GM12878 (cell line): ENCODE measurements at regions of chr1 and their contacts with region 1.

Region 1: DNA sequence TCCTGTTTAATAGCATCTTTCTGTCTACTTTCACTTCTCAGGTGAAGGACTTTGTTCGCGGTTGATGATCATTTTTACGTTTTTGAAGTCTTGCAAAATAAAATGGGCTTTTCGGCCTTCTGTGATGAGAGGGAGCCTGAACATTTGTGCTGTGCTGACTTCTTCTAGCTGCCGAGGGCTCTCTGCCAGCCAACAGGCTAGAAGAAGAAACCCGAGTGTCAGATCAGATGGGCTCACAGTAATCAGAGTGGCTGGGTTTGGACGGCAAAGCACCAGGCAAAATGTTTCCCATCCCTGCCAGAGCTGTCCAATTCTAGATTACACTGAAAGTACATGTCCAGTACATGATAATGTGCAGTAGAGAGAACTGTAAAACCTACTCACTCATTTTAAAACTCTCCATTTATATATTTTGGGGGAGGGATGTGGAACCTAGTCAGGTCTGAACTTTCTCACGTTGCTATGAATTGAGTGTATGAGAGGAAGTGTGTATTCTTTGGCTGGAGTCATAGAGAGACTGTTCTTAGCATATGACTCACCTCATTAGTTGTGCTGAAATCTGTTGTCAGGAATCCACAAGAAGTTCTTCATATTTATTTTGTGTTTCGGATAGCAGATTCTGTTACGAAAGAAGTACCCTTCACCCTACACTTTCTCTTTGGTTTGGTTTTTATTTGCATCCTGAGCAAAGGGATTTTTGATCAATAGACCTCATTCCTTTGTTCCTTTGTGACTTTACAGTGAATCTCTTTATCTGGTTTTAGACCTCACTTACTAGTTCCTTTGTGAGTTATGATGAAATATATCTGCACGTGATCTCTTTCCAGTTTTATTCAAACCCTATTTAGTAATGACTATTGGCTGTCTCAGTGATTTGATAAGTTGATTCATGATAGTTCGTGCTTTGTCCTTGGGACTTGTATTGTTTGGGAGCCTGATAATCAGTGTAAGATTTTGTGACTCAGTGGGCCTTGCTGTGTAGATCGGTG is 4.8 kb downstream of the ATP1A1 start:
- DNase-seq: peak; percentile 96
- ATAC-seq: peak; percentile 60
- H3K4me3 ChIP-seq: peak overlapping the region; percentile 95
- H3K27ac ChIP-seq: peak overlapping the region; percentile 96
- H3K4me1 ChIP-seq: peaks cover 38% of the 10 kb centered on the region
- H3K27me3 ChIP-seq: no peaks in the 10 kb centered on the region
- CTCF ChIP-seq: no peak
- EP300 ChIP-seq: peak; percentile 84 to 92
- POLR2A ChIP-seq: peak; percentile 56
- RAD21 ChIP-seq: no peak

Region 2: DNA sequence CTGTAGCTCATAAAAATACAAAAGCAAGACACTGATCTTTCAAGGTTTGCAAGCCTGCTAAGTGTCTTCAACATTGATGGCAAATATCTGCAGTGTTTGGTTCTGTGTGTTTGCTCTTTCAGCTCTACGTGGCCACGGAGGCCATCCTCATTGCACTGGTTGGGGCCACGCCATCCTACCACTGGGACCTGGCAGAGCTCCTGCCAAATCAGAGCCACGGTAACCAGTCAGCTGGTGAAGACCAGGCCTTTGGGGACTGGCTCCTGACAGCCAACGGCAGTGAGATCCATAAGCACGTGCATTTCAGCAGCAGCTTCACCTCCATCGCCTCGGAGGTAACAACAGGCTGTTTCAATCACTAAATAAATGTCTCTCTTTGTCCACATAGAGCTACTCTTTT is 385.9 kb before region 1 on chr1:
- CTCF ChIA-PET with region 1: no interaction called
- POLR2A ChIA-PET with region 1: no interaction called
- RAD21 ChIA-PET with region 1: no interaction called
- SMC1A ChIA-PET with region 1: no interaction called
- in situ Hi-C with region 1: no loop called
- intact Hi-C with region 1: no loop called
- DNase-seq: no peak
- ATAC-seq: no peak
- H3K4me3 ChIP-seq: no peak overlapping the region
- H3K27ac ChIP-seq: no peak overlapping the region
- H3K4me1 ChIP-seq: no peaks in the 10 kb centered on the region
- H3K27me3 ChIP-seq: no peaks in the 10 kb centered on the region
- CTCF ChIP-seq: no peak
- EP300 ChIP-seq: no peak
- POLR2A ChIP-seq: no peak
- RAD21 ChIP-seq: no peak

Region 3: DNA sequence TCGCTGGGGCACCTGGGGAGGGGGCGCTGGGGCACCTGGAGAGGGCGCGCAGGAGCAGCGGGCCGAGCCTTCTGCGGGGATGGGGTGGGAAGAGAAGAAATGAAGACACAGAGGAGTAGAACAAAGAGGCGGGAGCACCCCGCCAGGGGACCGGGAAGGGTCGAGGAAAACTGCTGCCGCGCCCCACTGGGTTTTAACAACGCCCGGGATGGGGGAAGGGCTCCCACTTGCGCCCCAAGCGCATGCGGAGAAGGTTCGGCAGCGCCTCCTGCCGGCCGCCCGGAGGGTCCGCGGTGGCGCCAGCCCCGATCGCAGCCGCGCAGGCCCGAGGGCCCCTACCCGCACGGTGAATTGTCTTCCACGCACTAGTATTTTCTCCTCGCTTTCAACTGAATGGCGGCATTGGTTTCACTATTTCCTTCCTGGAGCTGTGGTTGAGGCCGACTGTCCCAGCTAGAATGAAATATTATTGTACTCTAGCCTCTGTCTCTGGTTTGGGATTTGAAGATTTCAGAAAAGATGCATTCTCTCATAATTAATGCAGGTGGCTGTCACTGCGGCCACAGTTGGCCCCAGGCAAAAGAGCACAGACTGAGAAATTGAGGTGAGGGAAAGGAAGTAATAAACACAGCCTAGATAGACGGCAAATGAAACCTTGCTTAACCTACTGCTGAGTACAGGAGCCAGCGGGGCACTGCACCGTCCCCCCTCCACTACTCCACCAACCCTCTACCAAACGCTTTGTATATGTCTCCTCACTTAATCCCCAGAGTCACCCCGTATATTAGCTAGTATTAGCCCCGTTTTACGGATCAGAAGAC is 209.3 kb before region 1 on chr1:
- CTCF ChIA-PET with region 1: no interaction called
- POLR2A ChIA-PET with region 1: no interaction called
- RAD21 ChIA-PET with region 1: no interaction called
- SMC1A ChIA-PET with region 1: no interaction called
- in situ Hi-C with region 1: no loop called
- intact Hi-C with region 1: no loop called
- DNase-seq: no peak
- ATAC-seq: peak; percentile 98
- H3K4me3 ChIP-seq: peak overlapping the region; percentile 66
- H3K27ac ChIP-seq: no peak overlapping the region
- H3K4me1 ChIP-seq: no peaks in the 10 kb centered on the region
- H3K27me3 ChIP-seq: no peaks in the 10 kb centered on the region; a peak in 2 of 4 replicates
- CTCF ChIP-seq: peak; percentile 75 to 87 (median 84)
- EP300 ChIP-seq: no peak
- POLR2A ChIP-seq: no peak
- RAD21 ChIP-seq: peak; percentile 37; the same call in 1 of the 2 replicates

Region 4: DNA sequence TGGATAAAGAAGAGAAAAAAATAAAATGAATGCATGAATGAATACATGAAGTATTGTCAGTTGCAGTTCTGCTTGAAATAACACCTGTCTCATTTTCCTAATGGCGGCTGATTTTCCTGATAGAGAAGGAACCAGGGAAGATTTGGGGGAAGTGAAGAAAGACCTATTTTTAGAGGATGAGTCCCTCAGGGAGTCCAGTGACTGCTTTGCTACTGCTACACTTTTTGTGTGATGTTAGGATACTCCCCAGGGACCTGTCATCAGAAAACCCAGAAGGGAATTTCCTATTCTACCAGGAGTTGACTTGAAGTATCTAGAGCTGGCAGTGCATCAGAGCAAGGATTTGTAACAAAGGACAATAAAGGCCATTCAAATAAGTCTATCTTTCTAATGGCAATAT is 151.8 kb before region 1 on chr1:
- CTCF ChIA-PET with region 1: interaction called, 3 read pairs
- POLR2A ChIA-PET with region 1: interaction called, 5 read pairs
- RAD21 ChIA-PET with region 1: interaction called, 3 read pairs
- SMC1A ChIA-PET with region 1: interaction called, 4 read pairs
- in situ Hi-C with region 1: no loop called
- intact Hi-C with region 1: loop called (anchors 5 kb)
- DNase-seq: peak; percentile 40
- ATAC-seq: peak; percentile 64
- H3K4me3 ChIP-seq: no peak overlapping the region
- H3K27ac ChIP-seq: no peak overlapping the region
- H3K4me1 ChIP-seq: peaks cover 10% of the 10 kb centered on the region
- H3K27me3 ChIP-seq: no peaks in the 10 kb centered on the region
- CTCF ChIP-seq: no peak
- EP300 ChIP-seq: no peak; a peak in 1 of 4 replicates
- POLR2A ChIP-seq: no peak
- RAD21 ChIP-seq: no peak

Region 5: DNA sequence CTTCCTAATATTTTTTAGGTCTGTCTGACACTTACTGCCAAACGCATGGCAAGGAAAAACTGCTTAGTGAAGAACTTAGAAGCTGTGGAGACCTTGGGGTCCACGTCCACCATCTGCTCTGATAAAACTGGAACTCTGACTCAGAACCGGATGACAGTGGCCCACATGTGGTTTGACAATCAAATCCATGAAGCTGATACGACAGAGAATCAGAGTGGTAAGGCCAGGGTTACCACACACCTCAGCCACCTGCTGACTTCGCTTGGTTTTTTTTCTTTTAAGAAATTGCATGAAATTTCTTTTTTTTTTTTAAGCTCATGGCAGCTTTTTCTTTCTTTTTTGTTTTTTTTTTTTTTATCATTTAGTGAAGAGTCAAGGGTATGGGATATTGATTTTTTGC is 12.4 kb after region 1 on chr1:
- CTCF ChIA-PET with region 1: interaction called, 19 read pairs
- POLR2A ChIA-PET with region 1: interaction called, 11 read pairs
- RAD21 ChIA-PET with region 1: interaction called, 17 read pairs
- SMC1A ChIA-PET with region 1: interaction called, 23 read pairs
- in situ Hi-C with region 1: no loop called
- intact Hi-C with region 1: no loop called
- DNase-seq: no peak
- ATAC-seq: peak; percentile 92
- H3K4me3 ChIP-seq: no peak overlapping the region
- H3K27ac ChIP-seq: peak overlapping the region; percentile 35
- H3K4me1 ChIP-seq: peaks cover 14% of the 10 kb centered on the region
- H3K27me3 ChIP-seq: no peaks in the 10 kb centered on the region
- CTCF ChIP-seq: no peak
- EP300 ChIP-seq: no peak
- POLR2A ChIP-seq: no peak
- RAD21 ChIP-seq: peak; percentile 25

Region 6: GRCh38 chr1:116504308-116505156 is 126.7 kb after region 1 on chr1:
- CTCF ChIA-PET with region 1: interaction called, 9 read pairs
- POLR2A ChIA-PET with region 1: interaction called, 8 read pairs
- RAD21 ChIA-PET with region 1: interaction called, 7 read pairs
- SMC1A ChIA-PET with region 1: interaction called, 5 read pairs
- in situ Hi-C with region 1: no loop called
- intact Hi-C with region 1: loop called (anchors 1 kb)
- DNase-seq: peak; percentile 91
- ATAC-seq: peak; percentile 90
- H3K4me3 ChIP-seq: no peak overlapping the region
- H3K27ac ChIP-seq: peak overlapping the region; percentile 84
- H3K4me1 ChIP-seq: peaks cover 54% of the 10 kb centered on the region
- H3K27me3 ChIP-seq: no peaks in the 10 kb centered on the region
- CTCF ChIP-seq: no peak
- EP300 ChIP-seq: peak; percentile 43 to 69; a peak in 1 of 4 replicates
- POLR2A ChIP-seq: no peak
- RAD21 ChIP-seq: 0 out of 2 replicates have a peak, but pooled peaks have one; percentile 19

Region 7: GRCh38 chr1:117059678-117060440 is 682.0 kb after region 1 on chr1 and contains the start of gene TTF2:
- CTCF ChIA-PET with region 1: interaction called, 3 read pairs
- POLR2A ChIA-PET with region 1: interaction called, 6 read pairs
- RAD21 ChIA-PET with region 1: interaction called, 8 read pairs
- SMC1A ChIA-PET with region 1: interaction called, 3 read pairs
- in situ Hi-C with region 1: no loop called
- intact Hi-C with region 1: loop called (anchors 5 kb)
- DNase-seq: peak; percentile 99
- ATAC-seq: peak; percentile 86
- H3K4me3 ChIP-seq: peak within 1 kb of the TSS; percentile 84
- H3K27ac ChIP-seq: peak within 1 kb of the TSS; percentile 90
- H3K4me1 ChIP-seq: peaks cover 4% of the 10 kb centered on the region
- H3K27me3 ChIP-seq: no peaks in the 10 kb centered on the region
- CTCF ChIP-seq: peak in 1 of 3 experiments; percentile 26; a peak in 1 of 6 replicates
- EP300 ChIP-seq: peak in 1 of 2 experiments; percentile 40; a peak in 1 of 4 replicates
- POLR2A ChIP-seq: peak; percentile 85
- RAD21 ChIP-seq: no peak
- polyA plus RNA-seq, gene TTF2: 17.7 to 20.8 TPM